SK-N-SH (cell line): ENCODE measurements at regions of chrX and their contacts with region 1.

Region 1: DNA sequence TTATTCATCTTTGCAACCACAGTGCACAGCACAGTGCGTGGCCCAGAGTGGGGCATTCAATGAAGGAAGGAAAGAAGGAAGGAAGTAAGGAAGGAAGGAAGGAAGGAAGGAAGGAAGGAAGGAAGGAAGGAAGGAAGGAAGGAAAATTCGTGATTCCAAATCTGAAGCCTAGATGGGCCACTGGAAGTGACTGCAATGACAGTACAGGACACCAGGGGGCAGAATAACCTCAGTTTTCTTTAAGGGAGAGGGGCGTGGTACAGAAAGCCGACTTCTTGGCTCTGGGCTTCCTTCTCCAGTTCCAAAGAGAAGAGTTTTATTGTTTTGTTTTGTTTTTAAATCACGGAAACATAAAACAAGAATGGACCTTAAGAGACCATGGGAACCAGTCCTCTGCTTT is 47.8 kb downstream of the APLN start:
- DNase-seq: peak; percentile 72
- H3K4me3 ChIP-seq: no peak overlapping the region
- H3K27ac ChIP-seq: no peak overlapping the region
- H3K4me1 ChIP-seq: peaks cover 0 to 3% of the 10 kb centered on the region in 2 experiments; a peak in 1 of 4 replicates
- H3K27me3 ChIP-seq: no peaks in the 10 kb centered on the region; the same call in 1 of the 2 replicates
- CTCF ChIP-seq: peak; percentile 83
- EP300 ChIP-seq: no peak
- RAD21 ChIP-seq: peak; percentile 91

Region 2: DNA sequence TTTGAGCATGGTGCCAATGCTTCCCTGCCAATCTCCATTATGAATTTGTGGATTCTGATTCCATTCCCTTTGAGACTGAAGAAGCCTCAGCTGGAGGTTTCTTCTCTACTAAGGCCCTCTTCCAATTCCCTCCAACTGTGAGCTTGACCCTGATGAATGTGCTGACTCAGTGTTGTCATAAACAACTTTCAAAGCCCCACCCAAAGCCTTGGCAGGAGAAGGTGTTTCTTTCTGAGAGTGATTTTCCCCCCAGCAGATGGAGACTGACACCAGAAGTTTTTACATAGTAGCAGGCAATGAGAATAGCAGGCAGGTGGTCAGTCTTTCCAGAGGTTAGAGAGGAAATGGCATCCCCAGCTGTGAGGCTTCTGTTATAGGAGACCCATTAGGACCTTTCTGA is 13.8 kb before region 1 on chrX:
- CTCF ChIA-PET with region 1: interaction called, 14 read pairs
- POLR2A ChIA-PET with region 1: no interaction called
- DNase-seq: no peak
- H3K4me3 ChIP-seq: no peak overlapping the region
- H3K27ac ChIP-seq: no peak overlapping the region
- H3K4me1 ChIP-seq: no peaks in the 10 kb centered on the region
- H3K27me3 ChIP-seq: no peaks in the 10 kb centered on the region
- CTCF ChIP-seq: no peak
- EP300 ChIP-seq: no peak
- RAD21 ChIP-seq: no peak